Gastrocnemius medialis (tissue), 4 donors: ENCODE measurements at regions of chr6 and their contacts with region 1.

Region 1: GRCh38 chr6:109187399-109188114 is 92.2 kb downstream of the CEP57L1 start:
- DNase-seq: peak; percentile 22 to 25
- ATAC-seq: peak; percentile 58 to 68
- H3K4me3 ChIP-seq: no peak overlapping the region
- H3K27ac ChIP-seq: no peak overlapping the region
- H3K4me1 ChIP-seq: peaks cover 0 to 3% of the 10 kb centered on the region in 2 donors
- H3K27me3 ChIP-seq: no peaks in the 10 kb centered on the region
- CTCF ChIP-seq: peak; percentile 85 to 96 (median 94)
- POLR2A ChIP-seq: no peak

Region 2: GRCh38 chr6:109139109-109139508 is 48.4 kb before region 1 on chr6:
- in situ Hi-C with region 1: no loop called
- intact Hi-C with region 1: no loop called
- DNase-seq: no peak
- ATAC-seq: no peak
- H3K4me3 ChIP-seq: no peak overlapping the region
- H3K27ac ChIP-seq: no peak overlapping the region
- H3K4me1 ChIP-seq: peaks cover 0 to 5% of the 10 kb centered on the region in 2 donors
- H3K27me3 ChIP-seq: no peaks in the 10 kb centered on the region
- CTCF ChIP-seq: no peak
- POLR2A ChIP-seq: no peak

Region 3: GRCh38 chr6:109292420-109292819 is 104.9 kb after region 1 on chr6:
- in situ Hi-C with region 1: no loop called
- intact Hi-C with region 1: loop called (anchors 5 kb)
- DNase-seq: peak; percentile 67 to 70
- ATAC-seq: peak; percentile 83 to 87
- H3K4me3 ChIP-seq: no peak overlapping the region
- H3K27ac ChIP-seq: peak overlapping the region; percentile 74 to 82 (median 76)
- H3K4me1 ChIP-seq: peaks cover 20 to 34% of the 10 kb centered on the region in 2 donors
- H3K27me3 ChIP-seq: no peaks in the 10 kb centered on the region
- CTCF ChIP-seq: peak in 2 of 5 experiments; percentile 23 to 26
- POLR2A ChIP-seq: no peak

Region 4: DNA sequence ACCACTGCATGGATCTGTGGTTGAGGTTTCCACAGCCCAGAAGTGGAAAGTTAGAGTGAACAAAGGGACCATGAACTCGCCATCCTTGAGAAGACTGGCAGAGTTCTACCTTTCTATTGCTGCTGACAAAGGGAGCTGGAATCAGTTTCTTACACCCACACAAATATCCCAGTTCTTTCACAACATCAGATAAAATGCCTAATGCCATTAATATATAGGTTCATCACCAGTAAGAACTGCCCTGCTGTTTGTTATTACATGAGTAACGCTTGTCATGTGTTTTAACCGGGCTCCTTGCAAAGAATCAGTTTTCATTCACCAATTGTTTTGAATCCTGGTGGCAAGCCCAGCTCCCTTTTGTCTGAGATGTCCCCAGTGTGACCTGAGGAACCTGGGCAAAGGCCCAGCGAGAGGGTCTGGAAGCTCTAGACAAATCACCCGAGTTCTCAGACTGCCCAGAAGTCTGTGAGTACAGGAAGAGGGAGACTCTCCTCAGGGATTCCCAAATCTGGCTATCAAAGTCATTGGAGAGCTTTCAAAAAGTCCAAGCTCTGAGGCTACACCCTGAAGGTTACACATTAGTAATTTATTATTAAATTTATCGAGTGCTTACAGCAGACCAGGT is 202.2 kb after region 1 on chr6:
- in situ Hi-C with region 1: loop called (anchors 5 to 10 kb)
- intact Hi-C with region 1: no loop called
- DNase-seq: no peak
- ATAC-seq: peak in 1 of 2 donors; percentile 16
- H3K4me3 ChIP-seq: no peak overlapping the region
- H3K27ac ChIP-seq: peak overlapping the region in 1 of 4 donors; percentile 68
- H3K4me1 ChIP-seq: peaks cover 9 to 15% of the 10 kb centered on the region in 2 donors
- H3K27me3 ChIP-seq: no peaks in the 10 kb centered on the region
- CTCF ChIP-seq: no peak
- POLR2A ChIP-seq: no peak

Region 5: GRCh38 chr6:109440331-109441068 is 252.9 kb after region 1 on chr6 and contains the starts of genes PPIL6 and SMPD2:
- in situ Hi-C with region 1: no loop called
- intact Hi-C with region 1: loop called (anchors 1 kb)
- DNase-seq: peak; percentile 69 to 85
- ATAC-seq: peak; percentile 90 to 92
- H3K4me3 ChIP-seq: peak within 1 kb of the TSS; percentile 73 to 96 (median 87)
- H3K27ac ChIP-seq: peak within 1 kb of the TSS; percentile 74 to 89 (median 83)
- H3K4me1 ChIP-seq: peaks cover 10 to 15% of the 10 kb centered on the region in 2 donors
- H3K27me3 ChIP-seq: no peaks in the 10 kb centered on the region
- CTCF ChIP-seq: peak in 2 of 5 experiments; percentile 36 to 40
- POLR2A ChIP-seq: peak; percentile 36 to 62
- total RNA-seq, gene PPIL6: 0.64 to 2.9 (median 1.3) TPM
- total RNA-seq, gene SMPD2: 3.9 to 7.7 (median 5.9) TPM